ENCODE measurements at regions of chr6 and their contacts with region 1.

Region 1: GRCh38 chr6:157008568-157008967 is 231.4 kb downstream of the ARID1B start:
- DNase-seq: no peak
- H3K4me3 ChIP-seq: no peak overlapping the region
- H3K27ac ChIP-seq: no peak overlapping the region
- H3K4me1 ChIP-seq: peaks cover 1 to 9% (median 7%) of the 10 kb centered on the region in 4 experiments; a peak in 4 of 7 replicates
- H3K27me3 ChIP-seq: no peaks in the 10 kb centered on the region
- CTCF ChIP-seq: no peak
- EP300 ChIP-seq: no peak
- POLR2A ChIP-seq: no peak
- RAD21 ChIP-seq: no peak

Region 2: DNA sequence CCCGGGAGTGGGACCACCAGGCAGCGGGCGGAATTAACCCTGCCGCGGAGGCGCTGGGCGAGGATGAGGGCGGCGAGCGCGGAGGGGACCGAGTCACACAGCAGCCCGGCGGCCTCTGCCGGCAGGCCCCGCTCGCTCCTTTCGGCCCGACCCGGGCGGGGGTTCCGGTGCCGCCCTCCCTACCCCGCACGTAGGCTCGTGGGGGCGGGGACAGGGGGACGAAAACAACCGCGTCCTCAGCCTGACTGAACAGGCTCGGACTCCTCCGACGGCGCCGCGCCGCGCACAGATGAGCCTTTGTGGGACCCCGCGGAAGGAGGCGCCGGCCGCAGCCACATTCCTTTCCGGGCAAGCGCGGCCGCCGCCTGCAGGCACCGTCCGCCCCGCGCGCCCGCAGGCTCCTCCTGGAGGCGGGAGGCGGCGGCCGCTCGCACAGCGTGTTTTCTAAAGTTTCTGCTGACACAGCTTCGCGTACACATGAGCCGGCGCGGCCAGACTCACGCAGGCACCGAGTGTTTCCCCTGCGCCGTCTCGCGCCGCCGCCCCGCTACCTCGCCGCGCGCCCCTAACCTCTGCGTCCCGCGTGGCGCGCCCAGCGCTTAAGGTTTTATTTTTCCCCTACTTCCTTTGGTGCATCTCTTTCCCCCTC is 12.9 kb after region 1 on chr6:
- CTCF ChIA-PET with region 1: interaction called, 3 read pairs
- POLR2A ChIA-PET with region 1: interaction called, 15 read pairs
- DNase-seq: peak; percentile 65 to 90
- H3K4me3 ChIP-seq: peak overlapping the region; percentile 69 to 97 (median 79)
- H3K27ac ChIP-seq: peak overlapping the region; percentile 95
- H3K4me1 ChIP-seq: peaks cover 0 to 7% (median 2%) of the 10 kb centered on the region in 4 experiments; a peak in 3 of 7 replicates
- H3K27me3 ChIP-seq: no peaks in the 10 kb centered on the region
- CTCF ChIP-seq: peak in 2 of 3 experiments; percentile 9 to 39; a peak in 2 of 4 replicates
- EP300 ChIP-seq: 0 out of 3 replicates have a peak, but pooled peaks of 1 of the 2 experiments have one; percentile 23
- POLR2A ChIP-seq: peak; percentile 94 to 97
- RAD21 ChIP-seq: peak; percentile 14 to 30; a peak in 2 of 4 replicates

Measured in H1 (cell line).